Activated B cell treated with CpG ODN at 0.5 μM for 24 hours (primary cell): ENCODE measurements at regions of chr1 and their contacts with region 1.

Region 1: DNA sequence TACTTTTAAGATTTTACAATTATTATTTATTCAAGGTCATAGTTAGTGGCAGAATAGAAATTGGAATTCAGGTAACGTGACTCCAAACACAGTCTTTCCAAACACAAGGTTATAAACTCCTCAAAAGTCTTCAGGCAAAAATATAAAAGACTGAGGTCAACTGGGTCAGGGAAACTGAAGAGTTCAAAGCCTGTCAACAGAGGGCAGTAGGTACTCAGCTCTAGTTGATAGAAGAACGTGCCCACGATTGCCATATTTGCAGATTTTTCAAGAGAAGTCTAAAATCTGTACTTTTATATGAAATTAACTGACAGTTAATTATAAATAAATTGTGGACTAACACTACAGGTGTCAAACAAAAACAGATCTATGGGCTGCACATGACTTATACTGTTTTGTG is 135.0 kb downstream of the LHX4 start:
- DNase-seq: no peak
- ATAC-seq: no peak
- H3K4me3 Mint-ChIP-seq: no peak overlapping the region
- H3K27ac Mint-ChIP-seq: no peak overlapping the region
- H3K4me1 Mint-ChIP-seq: no peaks in the 10 kb centered on the region
- H3K27me3 Mint-ChIP-seq: no peaks in the 10 kb centered on the region
- CTCF ChIP-seq: no peak

Region 2: GRCh38 chr1:179926494-179927205 is 438.4 kb before region 1 on chr1:
- CTCF ChIA-PET with region 1: no interaction called
- POLR2A ChIA-PET with region 1: no interaction called
- intact Hi-C with region 1: loop called (anchors 5 kb)
- DNase-seq: no peak
- ATAC-seq: no peak
- H3K4me3 Mint-ChIP-seq: no peak overlapping the region
- H3K27ac Mint-ChIP-seq: no peak overlapping the region
- H3K4me1 Mint-ChIP-seq: peaks cover 2% of the 10 kb centered on the region
- H3K27me3 Mint-ChIP-seq: no peaks in the 10 kb centered on the region
- CTCF ChIP-seq: no peak

Region 3: DNA sequence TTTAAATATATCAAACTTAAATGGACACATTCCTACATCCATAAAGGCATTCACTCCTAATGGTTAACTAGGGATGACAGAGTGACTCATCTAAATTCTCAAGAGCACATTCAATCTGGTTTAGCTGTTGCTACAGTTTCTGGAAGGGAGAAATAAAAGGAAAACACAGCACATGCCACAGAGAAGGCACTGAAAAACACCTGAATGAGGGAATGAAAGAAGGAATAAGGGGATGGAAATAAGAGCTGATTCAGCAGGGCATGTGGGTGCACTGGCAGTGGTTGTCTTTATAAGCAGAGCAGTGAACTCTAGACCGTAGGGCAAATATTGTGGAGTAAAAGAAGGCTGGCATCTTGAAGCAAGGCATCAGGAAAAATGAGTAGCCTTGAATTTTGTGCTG is 55.7 kb before region 1 on chr1:
- CTCF ChIA-PET with region 1: no interaction called
- POLR2A ChIA-PET with region 1: no interaction called
- intact Hi-C with region 1: no loop called
- DNase-seq: no peak
- ATAC-seq: no peak
- H3K4me3 Mint-ChIP-seq: no peak overlapping the region
- H3K27ac Mint-ChIP-seq: no peak overlapping the region
- H3K4me1 Mint-ChIP-seq: no peaks in the 10 kb centered on the region
- H3K27me3 Mint-ChIP-seq: no peaks in the 10 kb centered on the region
- CTCF ChIP-seq: no peak